Activated T-helper 1 cell treated with anti-CD3 and anti-CD28 coated beads, Interleukin-12 subunit alpha, Interleukin-12 subunit beta, Interleukin-2, Interleukin-4 antibody, amounts not matched to agents 30 ng/mL and 10 ng/mL and 1 ng/mL, durations not matched to agents 14 hours and 24 hours and 36 hours (primary cell): ENCODE measurements at regions of chr5 and their contacts with region 1.

Region 1: DNA sequence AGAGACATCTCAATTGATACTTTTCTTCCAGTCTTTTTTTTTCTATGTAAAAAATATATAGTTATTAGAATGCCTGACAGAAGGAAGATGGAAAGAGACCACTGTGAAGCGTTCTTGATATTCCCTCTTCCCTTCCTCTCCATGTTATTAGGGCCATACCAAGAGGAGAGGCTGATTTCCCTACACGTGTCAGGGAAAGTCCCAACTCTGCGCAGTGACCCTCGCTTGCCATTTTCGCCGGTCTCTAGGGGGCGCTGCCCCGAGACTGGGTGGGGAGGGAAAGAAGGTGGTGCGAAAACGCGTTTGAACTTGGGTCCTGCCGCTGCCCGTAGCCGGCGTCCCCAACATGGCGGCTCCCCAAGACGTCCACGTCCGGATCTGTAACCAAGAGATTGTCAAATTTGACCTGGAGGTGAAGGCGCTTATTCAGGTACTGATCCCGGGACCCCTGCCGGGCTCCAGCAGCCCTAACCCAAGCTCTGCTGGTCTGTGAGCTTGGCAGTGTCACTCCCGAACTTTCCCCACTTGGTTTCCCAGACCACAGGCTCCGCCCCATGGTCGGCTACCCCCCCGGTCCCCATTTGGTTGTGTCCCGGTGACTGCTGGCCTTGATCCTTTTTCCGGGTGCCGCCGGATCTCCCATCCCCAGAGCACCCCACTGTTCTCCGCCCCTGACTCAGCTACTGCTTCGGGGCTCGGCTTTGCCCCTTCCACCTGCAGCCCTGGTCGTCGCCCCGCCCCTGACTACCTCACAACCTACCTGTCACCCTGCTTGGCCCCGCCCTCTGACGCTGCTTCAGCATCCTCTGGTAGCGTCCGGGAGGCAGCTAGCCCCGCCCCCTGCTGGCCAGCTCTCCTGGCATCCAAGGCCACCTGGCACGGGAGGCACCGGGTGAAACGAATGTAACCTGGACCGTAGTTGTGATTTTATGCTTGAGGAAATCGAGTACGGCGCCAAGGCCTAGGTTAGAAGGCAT is at the start of gene BNIP1:
- DNase-seq: peak; percentile 91
- H3K4me3 Mint-ChIP-seq: peak within 1 kb of the TSS; percentile 96
- H3K27ac Mint-ChIP-seq: peak within 1 kb of the TSS; percentile 97
- H3K4me1 Mint-ChIP-seq: peaks cover 9% of the 10 kb centered on the region
- H3K27me3 Mint-ChIP-seq: no peaks in the 10 kb centered on the region
- total RNA-seq, gene BNIP1: 22.6 and 25.3 TPM in 2 replicates

Region 2: DNA sequence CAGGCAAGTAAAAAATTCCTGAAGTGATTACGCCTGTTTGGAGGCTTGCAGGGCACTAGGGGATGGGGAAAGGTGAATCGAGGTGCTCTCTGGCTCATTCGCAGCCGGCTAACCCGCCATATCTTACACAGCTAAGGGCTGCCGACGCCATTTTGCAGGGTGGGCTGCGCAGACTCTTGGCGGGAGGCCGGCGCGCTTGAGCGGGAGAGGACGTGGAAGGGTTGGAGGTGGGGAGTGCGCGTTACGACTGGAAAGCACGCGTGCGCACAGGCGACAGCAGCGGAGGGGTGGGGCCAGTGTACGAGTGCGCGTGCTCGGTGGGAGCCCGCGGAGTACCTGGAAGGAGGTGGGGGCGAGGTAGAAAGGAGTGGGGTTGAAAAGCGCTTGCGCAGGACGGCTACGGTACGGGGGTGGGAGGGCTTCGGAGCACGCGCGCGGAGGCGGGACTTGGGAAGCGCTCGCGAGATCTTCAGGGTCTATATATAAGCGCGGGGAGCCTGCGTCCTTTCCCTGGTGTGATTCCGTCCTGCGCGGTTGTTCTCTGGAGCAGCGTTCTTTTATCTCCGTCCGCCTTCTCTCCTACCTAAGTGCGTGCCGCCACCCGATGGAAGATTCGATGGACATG is 1757.0 kb before region 1 on chr5 and contains the start of gene NPM1:
- intact Hi-C with region 1: loop called (anchors 2 kb)
- DNase-seq: peak; percentile 97
- H3K4me3 Mint-ChIP-seq: peak within 1 kb of the TSS; percentile 97
- H3K27ac Mint-ChIP-seq: peak within 1 kb of the TSS; percentile 98
- H3K4me1 Mint-ChIP-seq: peaks cover 43% of the 10 kb centered on the region
- H3K27me3 Mint-ChIP-seq: peaks cover 8% of the 10 kb centered on the region
- total RNA-seq, gene NPM1: 2,729 and 2,809 TPM in 2 replicates

Region 3: DNA sequence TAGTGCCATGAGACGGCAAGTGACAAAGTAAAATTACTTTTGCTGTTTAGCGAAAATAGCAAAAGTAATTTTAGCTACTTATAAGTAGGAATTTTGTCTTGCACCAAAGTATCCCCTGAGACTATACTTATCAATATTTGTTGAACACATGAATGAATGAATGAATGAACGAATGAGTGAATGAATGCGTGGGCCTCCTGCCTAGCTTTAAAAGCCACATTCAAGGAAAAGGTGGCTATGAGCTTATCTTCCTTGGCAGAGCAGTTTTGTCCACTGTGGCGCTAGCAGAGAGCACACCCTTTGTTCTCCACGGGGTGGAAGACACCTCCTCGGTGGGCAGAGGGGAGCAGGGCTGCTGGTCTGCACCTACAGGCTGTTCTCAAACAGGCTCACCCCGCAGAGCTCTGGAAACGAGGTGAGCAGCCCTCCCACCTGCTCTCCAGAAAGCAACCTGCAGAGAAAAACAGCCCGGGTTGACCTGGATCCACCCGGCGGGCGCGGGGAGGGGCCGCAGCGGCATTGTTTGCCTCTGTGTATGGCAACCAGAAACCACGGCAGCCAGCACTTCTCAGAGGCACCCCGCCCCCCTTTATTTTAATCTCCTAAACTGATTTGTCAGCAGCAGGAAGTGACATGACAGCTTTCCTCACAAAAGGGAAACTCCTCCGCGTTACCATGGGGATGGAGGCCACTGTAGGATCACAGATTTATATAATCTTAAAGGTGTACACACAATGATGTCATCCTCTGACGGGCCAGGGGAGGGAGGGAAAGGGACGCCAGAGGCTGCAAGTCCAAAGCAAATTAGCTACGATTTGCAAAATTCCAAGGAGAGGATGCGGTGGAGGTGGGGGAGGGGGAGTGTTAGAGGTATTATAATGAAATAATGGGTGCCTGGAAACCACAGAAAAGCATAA is 379.4 kb before region 1 on chr5:
- intact Hi-C with region 1: loop called (anchors 1 kb)
- DNase-seq: peak; percentile 95
- H3K4me3 Mint-ChIP-seq: peak overlapping the region; percentile 76
- H3K27ac Mint-ChIP-seq: peak overlapping the region; percentile 87
- H3K4me1 Mint-ChIP-seq: peaks cover 38% of the 10 kb centered on the region
- H3K27me3 Mint-ChIP-seq: peaks cover 6% of the 10 kb centered on the region

Region 4: GRCh38 chr5:172958331-172959046 is 186.0 kb before region 1 on chr5:
- intact Hi-C with region 1: loop called (anchors 1 kb)
- DNase-seq: peak; percentile 51
- H3K4me3 Mint-ChIP-seq: peak overlapping the region; percentile 99
- H3K27ac Mint-ChIP-seq: peak overlapping the region; percentile 98
- H3K4me1 Mint-ChIP-seq: peaks cover 27% of the 10 kb centered on the region
- H3K27me3 Mint-ChIP-seq: peaks cover 6% of the 10 kb centered on the region

Region 5: DNA sequence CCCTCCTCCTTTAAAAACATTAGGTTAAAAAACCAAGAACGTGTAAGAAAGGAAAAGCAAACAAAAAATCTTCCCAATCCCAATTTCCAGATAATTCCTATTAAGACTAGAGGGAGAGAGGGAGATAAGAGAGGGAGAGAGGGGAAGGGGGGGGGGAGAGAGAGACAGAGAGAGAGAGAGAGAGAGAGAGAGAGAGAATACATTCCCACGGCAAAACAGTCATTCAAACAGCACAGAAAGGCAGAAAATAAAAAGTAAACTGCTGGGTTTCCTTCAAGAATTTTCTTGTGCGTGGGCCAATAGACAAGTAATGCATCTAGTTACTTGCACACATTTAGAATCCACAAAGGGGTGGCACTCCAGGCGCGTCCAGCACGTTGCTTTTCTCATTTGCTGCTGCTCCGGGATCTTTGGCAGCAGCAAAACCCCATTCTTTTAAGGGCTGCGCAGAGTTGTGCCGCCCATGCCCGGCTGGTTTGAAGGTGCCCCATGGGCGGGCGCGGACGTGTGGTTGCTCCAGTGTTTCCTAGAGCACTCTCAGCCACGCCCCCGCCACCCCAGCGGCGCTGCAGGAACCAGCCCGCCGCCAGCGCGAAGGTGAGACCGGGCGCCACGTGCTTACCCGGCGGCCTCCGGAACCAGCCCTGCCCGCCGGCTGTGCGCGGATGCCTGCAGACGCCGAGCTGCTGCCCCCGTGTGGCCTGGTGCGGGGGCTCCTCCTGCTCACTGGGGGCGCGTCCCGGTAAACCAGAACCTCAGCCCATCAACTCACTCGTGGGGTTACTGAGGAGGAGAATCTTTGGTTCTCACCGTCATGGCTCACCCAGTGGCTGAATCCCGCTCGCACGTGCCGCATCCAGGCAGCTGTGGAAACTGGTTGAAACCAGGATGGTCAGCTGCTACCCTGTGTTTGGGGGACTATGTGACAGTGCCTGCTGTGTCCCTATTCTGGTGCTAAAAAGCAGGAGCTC is 139.1 kb after region 1 on chr5:
- intact Hi-C with region 1: loop called (anchors 2 kb)
- DNase-seq: peak; percentile 60
- H3K4me3 Mint-ChIP-seq: no peak overlapping the region
- H3K27ac Mint-ChIP-seq: no peak overlapping the region
- H3K4me1 Mint-ChIP-seq: no peaks in the 10 kb centered on the region
- H3K27me3 Mint-ChIP-seq: peaks cover 38% of the 10 kb centered on the region